GM18951 (cell line): ENCODE measurements at regions of chr18 and their contacts with region 1.

Region 1: DNA sequence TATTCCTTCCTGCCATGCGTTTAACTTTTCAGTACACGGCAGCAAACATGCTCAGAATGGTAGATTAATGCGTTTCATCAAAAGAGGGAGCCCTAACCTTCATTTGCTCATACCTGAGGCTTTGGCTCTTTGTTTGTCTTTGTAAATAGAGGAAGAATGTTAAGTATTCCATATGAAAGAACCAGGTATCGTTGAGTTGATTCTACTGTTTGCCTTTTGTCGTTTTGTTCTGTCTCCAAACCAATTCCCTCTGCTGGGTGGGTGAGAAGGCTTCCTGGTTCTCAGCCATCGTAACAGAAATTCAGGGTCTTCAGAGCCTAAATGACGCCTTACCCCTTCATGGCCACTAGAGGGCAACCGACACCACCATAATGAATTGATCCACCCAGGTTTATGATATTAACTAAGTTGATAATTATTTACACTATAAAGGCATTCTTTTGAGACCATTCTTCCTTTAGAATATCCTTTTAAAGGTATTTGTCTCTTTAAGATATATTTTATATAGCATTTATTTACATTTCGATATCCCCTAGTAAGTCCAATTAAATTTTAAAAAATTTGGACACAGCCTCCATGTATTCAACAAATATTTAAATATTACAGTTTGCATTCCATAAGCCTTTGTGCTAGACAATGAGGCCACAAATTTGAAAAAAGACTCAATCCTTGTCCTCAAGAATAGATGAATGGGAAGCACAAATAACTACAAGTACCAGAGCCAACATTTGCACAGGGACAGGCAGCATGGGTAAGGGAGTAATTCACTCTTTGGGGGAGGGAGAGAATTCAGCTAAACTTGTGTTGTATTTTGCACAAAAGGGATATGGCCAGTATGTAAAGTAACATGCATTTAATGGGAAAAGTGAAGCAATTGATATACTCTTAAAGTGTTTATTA is 48.1 kb downstream of the TIMM21 start:
- POLR2A ChIP-seq: no peak

Region 2: DNA sequence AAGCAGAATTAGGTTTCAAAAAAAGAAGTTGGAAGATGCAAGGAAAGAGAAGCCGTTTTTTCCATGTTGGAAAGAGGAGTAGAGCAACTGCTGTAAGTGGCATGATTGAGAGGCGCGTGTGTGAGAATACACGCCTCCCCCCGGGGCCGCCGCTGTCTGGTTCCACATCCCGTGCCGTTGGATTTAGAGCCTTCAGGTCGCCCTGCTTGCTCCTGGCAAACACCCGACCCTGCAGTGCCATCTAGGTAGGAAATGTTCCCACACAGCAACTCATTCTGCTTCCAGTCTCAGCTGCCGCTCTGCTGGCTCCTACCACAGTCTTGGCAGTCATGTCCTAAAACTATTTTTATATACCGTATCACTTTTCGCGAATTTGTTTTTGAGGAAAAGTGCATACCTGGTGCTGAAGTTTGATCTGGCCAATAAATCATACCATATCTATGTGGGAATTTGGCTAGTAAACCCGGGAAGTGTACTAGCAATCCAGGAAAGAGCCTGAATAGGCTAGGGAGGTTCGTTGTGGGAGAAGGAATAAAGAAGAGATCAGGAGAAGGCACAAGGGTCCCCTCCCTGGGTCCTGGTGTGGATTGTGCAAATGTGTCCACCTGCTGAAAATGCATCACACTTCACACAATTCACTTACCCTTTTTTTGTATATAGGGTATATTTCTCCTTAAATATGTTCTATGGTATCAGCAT is 421.5 kb before region 1 on chr18:
- in situ Hi-C with region 1: no loop called
- POLR2A ChIP-seq: no peak

Region 3: GRCh38 chr18:74342416-74343043 is 146.1 kb after region 1 on chr18:
- in situ Hi-C with region 1: loop called (anchors 10 kb)
- POLR2A ChIP-seq: no peak

Region 4: GRCh38 chr18:74388227-74388626 is 191.8 kb after region 1 on chr18:
- in situ Hi-C with region 1: no loop called
- POLR2A ChIP-seq: no peak

Region 5: DNA sequence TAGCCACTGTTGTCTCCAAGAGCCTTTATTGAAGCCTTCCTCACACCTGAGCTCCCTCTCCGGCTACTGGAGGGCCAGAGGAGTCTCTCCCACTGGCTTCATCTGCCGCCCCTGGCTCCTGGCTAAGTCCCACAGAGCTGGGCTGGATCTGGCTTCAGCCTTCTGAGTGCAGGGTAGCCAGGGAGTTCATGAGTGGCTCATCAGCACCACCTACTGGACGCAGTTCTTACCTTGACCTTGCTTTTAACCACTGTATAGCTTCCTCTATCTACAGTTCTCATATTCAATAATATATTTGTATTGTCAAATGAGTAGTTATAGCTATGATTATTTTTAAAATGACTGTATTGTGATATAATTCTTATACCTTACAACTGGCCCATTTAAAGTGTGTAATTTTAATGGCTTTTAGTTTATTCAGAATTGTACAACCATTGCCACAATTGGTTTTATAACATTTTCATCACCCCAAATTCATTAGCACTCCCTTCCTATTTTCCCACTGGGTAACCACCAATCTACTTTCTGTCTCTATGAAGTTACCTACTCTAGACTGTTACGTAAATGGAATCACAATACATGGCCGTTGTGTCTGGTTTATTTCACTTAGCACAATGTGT is 355.6 kb after region 1 on chr18:
- in situ Hi-C with region 1: loop called (anchors 10 kb)
- POLR2A ChIP-seq: no peak